Activated CD8-positive, alpha-beta T cell treated with anti-CD3 and anti-CD28 coated beads, Interleukin-2, amount 10 ng/mL, durations not matched to agents 7 days and 5 days (primary cell): ENCODE measurements at regions of chr11 and their contacts with region 1.

Region 1: DNA sequence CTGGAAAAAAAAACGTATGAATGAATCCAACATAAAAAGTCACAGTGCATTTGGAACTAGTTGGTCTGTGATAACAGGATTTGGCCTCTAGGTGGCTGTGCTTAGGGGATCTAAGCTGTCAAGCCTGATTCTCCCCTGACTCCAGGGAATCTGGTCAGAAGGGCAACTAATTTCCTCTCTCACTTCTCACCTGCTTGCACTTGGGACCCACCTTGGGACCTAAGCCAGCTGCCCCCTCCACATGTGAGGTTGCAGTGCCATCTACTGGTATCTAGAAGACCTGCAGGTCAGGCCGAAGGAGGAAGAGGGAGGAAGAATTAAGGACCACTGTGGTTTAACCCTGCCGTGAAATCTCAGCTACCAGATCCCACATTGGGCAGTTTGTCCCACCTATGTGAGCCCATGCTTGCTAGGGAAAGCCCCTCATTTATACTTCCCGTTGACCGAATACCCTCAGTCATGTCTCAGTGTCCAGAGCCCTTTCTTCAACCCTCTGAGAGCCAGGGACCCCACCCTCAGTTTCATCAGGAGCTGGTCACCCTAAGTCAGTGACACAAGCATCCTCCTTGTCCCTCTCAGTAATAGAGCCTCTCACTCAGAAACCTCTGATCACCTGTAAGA is 33.2 kb upstream of the CAVIN3 start:
- DNase-seq: peak; percentile 66
- ATAC-seq: peak; percentile 91
- H3K4me3 Mint-ChIP-seq: no peak overlapping the region
- H3K27ac Mint-ChIP-seq: no peak overlapping the region
- H3K4me1 Mint-ChIP-seq: peaks cover 2% of the 10 kb centered on the region
- H3K27me3 Mint-ChIP-seq: peaks cover 9% of the 10 kb centered on the region

Region 2: DNA sequence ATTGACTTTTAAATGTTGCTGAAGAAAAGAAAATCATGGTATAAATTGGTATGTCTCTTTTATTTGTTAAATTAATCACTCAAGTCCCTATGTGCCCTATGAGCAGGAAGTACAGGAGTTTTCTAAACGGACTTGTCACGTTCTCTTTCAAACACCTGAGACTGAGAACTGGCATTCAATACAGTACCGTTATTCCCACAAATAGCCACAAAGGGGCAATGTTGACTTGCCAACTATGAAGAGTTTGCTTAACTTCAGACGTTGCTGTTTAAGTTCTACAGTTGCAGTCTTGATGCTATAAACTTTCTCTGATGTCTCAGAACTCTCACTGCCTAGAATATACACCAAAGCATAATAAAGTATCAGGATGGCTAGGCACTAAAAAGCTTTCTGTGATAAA is 330.5 kb before region 1 on chr11:
- CTCF ChIA-PET with region 1: interaction called, 12 read pairs
- POLR2A ChIA-PET with region 1: no interaction called
- DNase-seq: peak; percentile 30
- ATAC-seq: peak; percentile 64
- H3K4me3 Mint-ChIP-seq: no peak overlapping the region
- H3K27ac Mint-ChIP-seq: no peak overlapping the region
- H3K4me1 Mint-ChIP-seq: no peaks in the 10 kb centered on the region
- H3K27me3 Mint-ChIP-seq: peaks cover 26% of the 10 kb centered on the region

Region 3: DNA sequence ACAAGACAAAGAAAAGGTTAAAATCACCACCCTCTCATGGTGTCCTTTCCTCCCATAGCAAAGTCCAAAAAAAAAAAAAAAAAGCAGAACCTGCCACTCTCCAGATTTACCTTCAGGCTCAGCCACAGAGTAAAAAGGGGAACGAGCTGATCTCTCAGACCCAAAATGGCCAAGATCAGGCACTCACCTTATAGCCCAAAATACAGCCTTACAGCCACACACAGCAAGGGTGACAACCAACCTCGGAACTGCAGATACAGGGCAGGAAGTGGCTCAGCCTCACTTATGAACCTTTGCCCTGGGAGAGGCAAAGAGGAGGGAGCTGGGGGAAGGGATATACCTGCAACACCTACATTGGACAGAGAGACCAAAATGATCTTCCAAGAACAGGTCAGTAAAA is 123.6 kb before region 1 on chr11:
- CTCF ChIA-PET with region 1: no interaction called
- POLR2A ChIA-PET with region 1: no interaction called
- DNase-seq: peak; percentile 62
- ATAC-seq: no peak
- H3K4me3 Mint-ChIP-seq: peak overlapping the region; percentile 52
- H3K27ac Mint-ChIP-seq: peak overlapping the region; percentile 63
- H3K4me1 Mint-ChIP-seq: peaks cover 45% of the 10 kb centered on the region
- H3K27me3 Mint-ChIP-seq: no peaks in the 10 kb centered on the region

Region 4: DNA sequence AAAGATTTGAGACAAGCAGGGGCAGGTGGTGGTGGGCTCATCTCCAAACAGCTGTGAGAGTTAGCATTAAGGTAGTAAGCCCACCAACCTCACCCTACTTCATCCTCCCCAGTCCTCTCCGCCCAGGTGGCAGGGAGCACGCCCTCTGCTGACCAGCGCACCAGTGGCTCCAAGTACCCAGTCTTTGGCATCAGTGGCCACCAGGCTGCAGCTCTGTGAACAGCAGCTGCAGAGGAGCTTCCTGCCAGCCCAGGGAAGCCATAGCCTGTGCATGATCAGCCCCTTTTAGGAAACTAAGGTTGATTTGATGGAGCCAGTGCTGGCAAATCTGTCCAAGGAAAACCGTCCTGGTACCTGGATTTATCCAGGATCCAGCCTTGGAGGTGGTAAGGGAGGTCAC is 54.9 kb before region 1 on chr11:
- CTCF ChIA-PET with region 1: interaction called, 10 read pairs
- POLR2A ChIA-PET with region 1: interaction called, 3 read pairs
- DNase-seq: peak; percentile 30
- ATAC-seq: no peak
- H3K4me3 Mint-ChIP-seq: no peak overlapping the region
- H3K27ac Mint-ChIP-seq: no peak overlapping the region
- H3K4me1 Mint-ChIP-seq: no peaks in the 10 kb centered on the region
- H3K27me3 Mint-ChIP-seq: peaks cover 16% of the 10 kb centered on the region

Region 5: GRCh38 chr11:6321961-6322362 is 31.5 kb before region 1 on chr11:
- CTCF ChIA-PET with region 1: interaction called, 22 read pairs
- POLR2A ChIA-PET with region 1: no interaction called
- DNase-seq: no peak
- ATAC-seq: no peak
- H3K4me3 Mint-ChIP-seq: no peak overlapping the region
- H3K27ac Mint-ChIP-seq: peak overlapping the region; percentile 41
- H3K4me1 Mint-ChIP-seq: peaks cover 30% of the 10 kb centered on the region
- H3K27me3 Mint-ChIP-seq: peaks cover 18% of the 10 kb centered on the region

Region 6: DNA sequence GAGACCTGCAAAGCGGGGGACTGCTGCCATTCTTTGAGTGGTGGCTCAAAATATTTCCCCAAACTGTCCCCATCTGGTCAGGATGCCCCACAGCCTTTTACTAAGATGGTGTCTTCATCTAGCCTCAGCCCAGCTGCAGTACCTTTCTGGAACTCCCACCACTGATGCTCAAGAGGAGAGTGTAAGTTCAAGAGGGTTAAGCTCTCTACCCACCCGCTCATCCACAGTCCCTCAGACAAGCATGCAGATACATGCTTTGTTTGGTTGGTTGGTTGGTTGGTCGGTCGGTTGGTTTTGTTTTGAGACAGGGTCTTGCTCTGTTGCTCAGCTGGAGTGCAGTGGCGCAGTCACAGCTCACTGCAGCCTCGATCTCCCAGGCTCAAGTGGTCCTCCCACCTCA is 18.7 kb before region 1 on chr11:
- CTCF ChIA-PET with region 1: interaction called, 35 read pairs
- POLR2A ChIA-PET with region 1: no interaction called
- DNase-seq: no peak
- ATAC-seq: no peak
- H3K4me3 Mint-ChIP-seq: no peak overlapping the region
- H3K27ac Mint-ChIP-seq: no peak overlapping the region
- H3K4me1 Mint-ChIP-seq: no peaks in the 10 kb centered on the region
- H3K27me3 Mint-ChIP-seq: peaks cover 15% of the 10 kb centered on the region